IMR-90 (cell line): ENCODE measurements at regions of chr7 and their contacts with region 1.

Region 1: GRCh38 chr7:80699045-80699638 is 60.7 kb downstream of the CD36 start:
- DNase-seq: peak; percentile 63
- ATAC-seq: peak; percentile 66
- H3K4me3 ChIP-seq: no peak overlapping the region
- H3K27ac ChIP-seq: no peak overlapping the region
- H3K4me1 ChIP-seq: peaks cover 9% of the 10 kb centered on the region
- H3K27me3 ChIP-seq: no peaks in the 10 kb centered on the region
- CTCF ChIP-seq: peak; percentile 69
- POLR2A ChIP-seq: no peak
- RAD21 ChIP-seq: peak; percentile 87

Region 2: DNA sequence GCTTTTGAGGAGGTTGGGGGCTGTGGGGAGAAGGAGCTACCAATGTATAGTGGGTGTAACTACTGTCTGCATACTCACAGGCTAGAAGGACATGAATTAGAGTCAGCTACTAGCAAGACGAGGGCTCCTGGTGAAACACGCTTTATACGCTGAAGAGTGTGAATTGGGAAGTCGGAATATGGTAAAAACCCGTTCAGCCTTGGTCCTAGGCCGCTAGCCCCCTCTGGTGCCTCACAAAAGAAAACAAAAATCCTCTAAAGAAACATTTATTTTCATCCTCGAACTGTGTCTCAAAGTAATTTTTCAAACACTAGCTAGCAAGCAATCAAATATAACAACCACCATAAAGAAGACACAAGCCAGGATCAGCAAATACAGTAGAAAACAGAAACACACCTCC is 557.8 kb after region 1 on chr7:
- CTCF ChIA-PET with region 1: no interaction called
- POLR2A ChIA-PET with region 1: no interaction called
- dilution Hi-C with region 1: no loop called
- in situ Hi-C with region 1: loop called (anchors 10 kb)
- intact Hi-C with region 1: loop called (anchors 1 kb)
- DNase-seq: peak; percentile 23
- ATAC-seq: no peak
- H3K4me3 ChIP-seq: no peak overlapping the region
- H3K27ac ChIP-seq: no peak overlapping the region
- H3K4me1 ChIP-seq: no peaks in the 10 kb centered on the region
- H3K27me3 ChIP-seq: no peaks in the 10 kb centered on the region
- CTCF ChIP-seq: peak; percentile 38
- POLR2A ChIP-seq: no peak
- RAD21 ChIP-seq: peak; percentile 57

Region 3: DNA sequence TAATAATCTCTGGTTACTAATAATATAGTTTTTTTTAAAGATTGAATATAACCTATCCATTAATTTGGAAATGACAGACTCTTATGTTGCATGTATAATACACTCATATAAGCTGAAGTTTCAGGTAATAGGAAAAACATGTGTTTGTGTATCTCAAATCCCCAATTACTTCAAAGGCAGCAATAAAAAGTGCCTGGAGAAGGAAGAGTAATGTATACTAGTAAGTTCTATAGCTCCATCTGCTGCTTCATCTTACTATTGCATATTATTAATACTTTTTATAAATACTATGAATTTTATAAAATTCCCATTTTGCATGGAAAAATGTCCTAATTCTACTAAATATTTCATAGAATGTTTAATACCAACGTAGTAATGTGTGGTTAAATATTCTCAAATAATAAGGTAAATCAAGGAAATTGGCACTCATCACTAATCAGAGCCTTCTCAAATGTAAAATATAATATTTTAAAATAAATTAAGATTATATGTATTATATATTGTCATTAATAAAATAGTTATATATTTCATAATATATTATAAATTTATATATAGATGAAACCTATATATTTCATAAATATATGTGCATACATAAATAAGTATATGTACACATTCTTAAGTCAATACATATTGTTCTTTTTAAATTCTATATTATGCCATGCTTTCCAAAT is 758.8 kb after region 1 on chr7:
- CTCF ChIA-PET with region 1: no interaction called
- POLR2A ChIA-PET with region 1: no interaction called
- dilution Hi-C with region 1: no loop called
- in situ Hi-C with region 1: loop called (anchors 5 kb)
- intact Hi-C with region 1: loop called (anchors 2 kb)
- DNase-seq: peak; percentile 56
- ATAC-seq: peak; percentile 42; the same call in 1 of the 2 replicates
- H3K4me3 ChIP-seq: no peak overlapping the region
- H3K27ac ChIP-seq: no peak overlapping the region
- H3K4me1 ChIP-seq: no peaks in the 10 kb centered on the region
- H3K27me3 ChIP-seq: peaks cover 2% of the 10 kb centered on the region; the same call in 1 of the 2 replicates
- CTCF ChIP-seq: peak; percentile 66
- POLR2A ChIP-seq: no peak
- RAD21 ChIP-seq: peak; percentile 66

Region 4: GRCh38 chr7:81469869-81470723 is 771.0 kb after region 1 on chr7:
- CTCF ChIA-PET with region 1: interaction called, 18 read pairs
- POLR2A ChIA-PET with region 1: no interaction called
- dilution Hi-C with region 1: no loop called
- in situ Hi-C with region 1: no loop called
- intact Hi-C with region 1: loop called (anchors 1 kb)
- DNase-seq: peak; percentile 81
- ATAC-seq: peak; percentile 94
- H3K4me3 ChIP-seq: no peak overlapping the region
- H3K27ac ChIP-seq: no peak overlapping the region
- H3K4me1 ChIP-seq: no peaks in the 10 kb centered on the region
- H3K27me3 ChIP-seq: no peaks in the 10 kb centered on the region
- CTCF ChIP-seq: peak; percentile 83
- POLR2A ChIP-seq: no peak
- RAD21 ChIP-seq: peak; percentile 89